ENCODE measurements at regions of chr9 and their contacts with region 1.

Region 1: DNA sequence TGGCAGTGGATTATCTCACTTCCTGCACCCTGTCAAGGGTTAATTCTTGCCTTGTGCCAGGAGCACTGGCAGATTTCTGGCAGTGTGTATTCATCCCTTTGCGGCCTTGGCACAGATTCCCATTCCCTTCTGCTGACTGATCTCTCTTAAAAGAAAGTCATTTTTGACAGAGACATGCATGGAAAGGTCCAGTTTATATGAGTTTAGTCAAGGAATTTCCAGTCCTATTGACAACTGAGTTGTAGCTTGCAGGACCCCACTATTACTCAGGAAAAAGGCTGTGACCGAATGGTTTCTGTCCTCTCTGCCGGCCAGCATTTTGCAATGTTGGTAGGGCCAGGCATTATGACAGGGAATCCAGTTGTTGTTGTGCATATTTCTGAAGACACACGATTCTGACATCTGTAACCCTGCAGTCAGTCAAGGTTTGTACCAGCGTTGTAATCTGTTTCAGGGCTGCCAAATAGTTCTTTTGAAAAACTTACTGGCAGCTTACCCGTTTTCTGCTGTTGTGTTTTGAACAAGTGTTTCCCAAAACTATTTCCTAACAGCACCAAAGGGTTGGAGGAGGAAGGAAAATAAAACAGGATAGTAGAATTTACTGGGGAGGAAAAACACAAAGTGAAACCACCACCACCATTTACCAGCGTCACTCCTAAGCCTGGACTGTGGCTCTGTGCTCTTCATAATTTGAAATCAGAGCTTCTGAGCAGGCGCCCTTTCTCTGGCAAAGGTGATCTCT is 243.4 kb upstream of the KLF4 start:
- DNase-seq: peak; percentile 82
- H3K4me3 ChIP-seq: peak overlapping the region in 3 of 4 donors; percentile 10 to 22 (median 14)
- H3K27ac ChIP-seq: peak overlapping the region; percentile 70 to 81 (median 80)
- H3K4me1 ChIP-seq: peaks cover 0 to 38% (median 18%) of the 10 kb centered on the region in 4 donors
- H3K27me3 ChIP-seq: no peaks in the 10 kb centered on the region
- CTCF ChIP-seq: no peak
- EP300 ChIP-seq: peak in 1 of 4 donors; percentile 6
- POLR2A ChIP-seq: no peak

Region 2: DNA sequence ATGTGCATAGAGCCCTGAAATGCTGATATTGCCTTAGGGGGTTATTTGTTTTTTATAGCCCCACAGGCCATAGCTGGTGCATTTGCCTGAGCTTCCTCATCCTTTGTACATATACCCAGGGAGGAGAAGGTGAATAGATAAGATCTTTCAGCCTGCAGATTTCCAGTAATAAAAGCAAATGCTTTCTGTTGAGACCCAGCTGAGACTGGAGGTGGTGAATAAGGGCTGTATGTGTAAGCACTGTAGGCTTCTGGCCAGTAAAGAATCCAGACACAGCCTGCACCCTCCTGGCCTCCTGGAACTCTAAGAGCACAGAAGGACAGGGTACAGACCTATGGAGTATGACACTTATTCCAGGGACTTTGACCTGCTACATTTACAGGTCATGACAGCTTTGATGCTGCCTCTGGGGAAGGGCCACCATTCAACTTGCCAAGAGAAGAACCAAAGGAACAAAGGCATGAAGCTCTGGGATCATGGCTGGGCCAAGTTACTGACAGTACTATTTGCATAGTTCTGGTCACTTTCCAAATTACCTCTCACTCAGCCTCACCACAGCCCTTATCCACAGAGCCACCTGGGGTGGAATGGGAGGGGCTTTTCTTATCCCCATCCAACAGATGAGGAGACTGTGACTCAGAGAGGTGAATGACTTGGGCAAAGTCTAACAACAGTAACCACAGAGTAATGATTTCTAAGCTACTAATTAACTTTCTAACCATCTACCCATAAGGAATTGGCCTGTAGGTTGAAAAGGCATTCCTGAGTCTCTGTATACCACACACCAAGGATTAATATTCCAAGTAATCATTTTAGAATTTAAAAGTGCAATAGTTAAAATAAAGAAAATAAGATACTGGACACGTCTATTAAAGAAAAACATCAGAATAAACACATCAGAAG is 361.1 kb after region 1 on chr9:
- intact Hi-C with region 1: no loop called
- DNase-seq: no peak
- H3K4me3 ChIP-seq: no peak overlapping the region
- H3K27ac ChIP-seq: peak overlapping the region in 1 of 4 donors; percentile 2
- H3K4me1 ChIP-seq: no peaks in the 10 kb centered on the region
- H3K27me3 ChIP-seq: no peaks in the 10 kb centered on the region
- CTCF ChIP-seq: no peak
- EP300 ChIP-seq: no peak
- POLR2A ChIP-seq: no peak

Region 3: DNA sequence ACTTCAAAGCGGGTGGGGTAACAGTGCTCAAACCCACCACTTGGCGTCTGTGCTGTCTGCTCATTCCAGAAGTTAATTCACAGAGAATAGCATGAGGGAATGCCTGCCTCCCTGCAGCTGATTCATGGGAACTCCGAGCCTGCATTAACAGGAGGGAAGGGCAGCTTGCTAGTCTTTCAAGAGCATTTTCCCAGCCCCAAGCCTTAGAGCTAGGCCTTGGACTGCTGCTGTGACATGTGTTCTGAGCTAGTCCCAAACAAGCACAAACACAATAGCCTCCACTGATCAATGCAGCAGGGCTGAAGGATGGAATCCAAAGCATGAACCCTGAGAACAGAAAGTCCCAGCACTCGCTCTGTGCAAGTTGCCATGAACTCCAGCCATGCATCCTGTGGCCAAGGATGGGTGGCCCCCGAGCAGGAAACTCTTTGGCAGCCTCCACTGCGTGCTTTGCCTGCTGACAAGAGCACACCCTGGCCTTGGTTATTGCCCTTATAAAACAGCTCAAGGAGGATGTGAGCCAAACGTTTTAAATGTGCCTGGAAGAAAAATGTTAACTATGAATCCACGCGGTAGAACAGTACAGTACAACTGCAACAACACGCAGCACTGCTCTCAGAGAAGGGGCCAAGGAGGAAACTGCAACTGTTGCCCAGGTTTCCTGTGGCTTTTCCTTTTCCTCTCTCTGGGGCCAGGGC is 409.7 kb after region 1 on chr9:
- intact Hi-C with region 1: loop called (anchors 5 kb)
- DNase-seq: peak; percentile 97
- H3K4me3 ChIP-seq: no peak overlapping the region
- H3K27ac ChIP-seq: peak overlapping the region; percentile 77 to 92 (median 84)
- H3K4me1 ChIP-seq: peaks cover 0 to 25% (median 24%) of the 10 kb centered on the region in 4 donors
- H3K27me3 ChIP-seq: no peaks in the 10 kb centered on the region
- CTCF ChIP-seq: peak in 1 of 4 experiments; percentile 51
- EP300 ChIP-seq: peak; percentile 34 to 97 (median 85)
- POLR2A ChIP-seq: no peak

Measured in sigmoid colon (tissue), 7 donors.